ENCODE measurements at regions of chr7 and their contacts with region 1.

Region 1: DNA sequence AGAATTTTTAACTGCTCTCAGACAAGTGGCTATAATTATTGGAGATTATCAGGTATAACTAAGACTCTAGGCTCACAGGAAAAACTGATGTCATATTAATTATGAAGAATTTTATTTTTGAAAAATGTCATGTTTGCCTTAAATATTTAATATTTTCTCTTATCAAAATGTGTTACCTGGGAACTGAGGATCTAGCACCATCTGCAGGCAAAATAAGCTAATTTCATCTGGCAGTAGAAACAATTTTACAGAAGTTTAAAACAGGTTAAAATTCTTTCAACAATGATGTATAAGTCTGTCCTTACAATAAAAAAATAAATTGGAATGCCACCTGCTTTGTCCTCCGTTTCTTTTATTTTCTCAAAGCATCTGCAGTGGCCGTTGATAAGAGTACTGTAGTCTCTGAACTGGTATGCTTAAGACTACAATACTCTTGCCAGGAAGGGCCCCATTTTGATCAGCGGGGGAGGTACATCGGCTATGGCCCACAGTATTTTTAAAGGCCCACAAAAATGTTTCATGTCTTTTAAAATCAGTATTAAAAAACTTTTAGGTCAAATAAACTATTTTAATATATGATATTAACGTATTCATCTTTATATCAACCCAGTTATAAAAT is 81.3 kb downstream of the VWDE start:
- DNase-seq: no peak
- H3K4me3 Mint-ChIP-seq: no peak overlapping the region
- H3K27ac Mint-ChIP-seq: no peak overlapping the region
- H3K4me1 Mint-ChIP-seq: no peaks in the 10 kb centered on the region
- H3K27me3 Mint-ChIP-seq: no peaks in the 10 kb centered on the region

Region 2: DNA sequence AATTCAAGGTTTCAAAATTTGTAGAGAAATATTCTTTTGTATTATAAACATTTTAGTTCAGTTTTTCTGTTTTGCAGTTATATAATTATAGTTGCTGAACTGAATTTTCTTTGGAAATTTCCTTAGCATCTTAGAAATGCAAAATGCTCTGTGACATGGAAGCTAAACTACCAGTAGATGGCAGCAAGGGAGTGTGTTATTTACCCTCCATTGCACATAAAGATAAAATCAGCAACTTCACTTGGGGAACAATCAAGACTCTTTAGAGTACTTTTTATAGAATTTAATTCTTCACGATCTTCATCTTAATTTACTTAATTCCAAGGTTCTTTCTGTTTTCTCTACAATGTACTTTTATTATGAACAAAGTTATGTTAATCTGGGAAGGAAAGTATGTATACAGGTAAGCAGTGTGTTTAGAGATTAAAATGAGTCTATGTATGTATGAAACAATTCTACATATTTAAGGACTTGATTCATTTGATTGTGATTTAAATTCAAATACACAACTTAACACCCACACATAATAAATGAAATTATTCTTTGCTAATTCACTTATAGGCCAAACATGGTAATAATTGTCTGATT is 894.6 kb before region 1 on chr7:
- CTCF ChIA-PET with region 1: no interaction called
- POLR2A ChIA-PET with region 1: no interaction called
- intact Hi-C with region 1: loop called (anchors 2 kb)
- DNase-seq: no peak
- H3K4me3 Mint-ChIP-seq: no peak overlapping the region
- H3K27ac Mint-ChIP-seq: no peak overlapping the region
- H3K4me1 Mint-ChIP-seq: no peaks in the 10 kb centered on the region
- H3K27me3 Mint-ChIP-seq: no peaks in the 10 kb centered on the region

Region 3: DNA sequence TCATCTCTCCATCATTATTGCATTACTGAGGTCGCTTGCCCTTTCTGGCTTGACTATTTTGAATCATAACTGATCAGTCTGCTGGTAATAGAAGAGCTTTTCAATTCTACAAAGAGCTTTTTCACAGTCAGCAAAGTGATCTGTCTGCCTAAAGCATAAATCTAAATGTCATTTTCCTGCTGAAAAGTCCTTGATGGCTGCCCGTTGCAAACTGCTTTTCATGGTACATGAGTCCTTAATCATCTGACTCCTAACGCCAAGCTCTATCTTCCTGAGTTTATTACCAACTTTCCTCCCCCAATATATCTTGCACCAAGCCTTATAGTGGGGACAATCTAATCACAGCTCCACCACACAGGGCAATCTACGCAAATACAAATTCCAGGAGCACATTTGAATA is 530.2 kb before region 1 on chr7:
- CTCF ChIA-PET with region 1: no interaction called
- POLR2A ChIA-PET with region 1: no interaction called
- intact Hi-C with region 1: no loop called
- DNase-seq: no peak
- H3K4me3 Mint-ChIP-seq: no peak overlapping the region
- H3K27ac Mint-ChIP-seq: no peak overlapping the region
- H3K4me1 Mint-ChIP-seq: no peaks in the 10 kb centered on the region
- H3K27me3 Mint-ChIP-seq: no peaks in the 10 kb centered on the region

Region 4: GRCh38 chr7:12062062-12062461 is 260.3 kb before region 1 on chr7:
- CTCF ChIA-PET with region 1: interaction called, 18 read pairs
- POLR2A ChIA-PET with region 1: no interaction called
- intact Hi-C with region 1: loop called (anchors 1 kb)
- DNase-seq: no peak
- H3K4me3 Mint-ChIP-seq: no peak overlapping the region
- H3K27ac Mint-ChIP-seq: no peak overlapping the region
- H3K4me1 Mint-ChIP-seq: peaks cover 13% of the 10 kb centered on the region
- H3K27me3 Mint-ChIP-seq: no peaks in the 10 kb centered on the region

Region 5: DNA sequence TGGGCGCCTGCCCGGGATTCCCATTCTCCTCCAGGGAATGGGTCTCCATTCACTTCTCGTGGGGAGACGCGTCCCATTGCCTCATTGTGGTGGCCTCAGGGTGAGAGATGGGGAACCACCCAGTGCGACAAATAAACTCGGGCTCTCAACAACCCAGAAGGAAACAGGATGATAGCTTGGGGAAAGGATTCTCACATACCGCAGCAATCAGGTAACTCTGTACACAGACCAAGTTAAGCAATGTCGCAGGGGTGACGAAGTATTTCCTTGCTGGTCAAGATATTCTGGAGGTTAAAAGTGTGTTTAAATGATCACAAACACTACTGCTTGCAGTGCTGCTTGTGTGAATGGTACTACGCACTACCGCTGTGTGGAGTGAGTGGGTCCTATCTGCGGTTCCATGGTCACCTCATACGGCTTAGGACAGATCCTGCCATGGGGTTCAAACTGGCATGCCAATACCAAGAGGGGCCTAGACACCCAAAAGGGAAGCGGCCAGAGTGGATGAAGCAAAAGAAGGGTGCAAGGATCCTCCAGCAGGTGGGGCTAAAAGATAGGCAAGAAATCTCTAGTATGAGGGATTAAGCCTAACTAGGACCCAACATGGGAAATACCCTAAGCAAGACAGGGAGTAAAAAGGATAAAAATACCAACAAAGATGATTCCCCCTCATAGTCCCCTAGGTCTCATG is 255.1 kb before region 1 on chr7:
- CTCF ChIA-PET with region 1: interaction called, 18 read pairs
- POLR2A ChIA-PET with region 1: no interaction called
- intact Hi-C with region 1: loop called (anchors 1 kb)
- DNase-seq: peak; percentile 62
- H3K4me3 Mint-ChIP-seq: no peak overlapping the region
- H3K27ac Mint-ChIP-seq: no peak overlapping the region
- H3K4me1 Mint-ChIP-seq: peaks cover 14% of the 10 kb centered on the region
- H3K27me3 Mint-ChIP-seq: no peaks in the 10 kb centered on the region

Region 6: GRCh38 chr7:12111422-12112405 is 210.7 kb before region 1 on chr7:
- CTCF ChIA-PET with region 1: no interaction called
- POLR2A ChIA-PET with region 1: no interaction called
- intact Hi-C with region 1: loop called (anchors 5 kb)
- DNase-seq: peak; percentile 26
- H3K4me3 Mint-ChIP-seq: peak overlapping the region; percentile 52
- H3K27ac Mint-ChIP-seq: no peak overlapping the region
- H3K4me1 Mint-ChIP-seq: peaks cover 10% of the 10 kb centered on the region
- H3K27me3 Mint-ChIP-seq: peaks cover 36% of the 10 kb centered on the region

Region 7: DNA sequence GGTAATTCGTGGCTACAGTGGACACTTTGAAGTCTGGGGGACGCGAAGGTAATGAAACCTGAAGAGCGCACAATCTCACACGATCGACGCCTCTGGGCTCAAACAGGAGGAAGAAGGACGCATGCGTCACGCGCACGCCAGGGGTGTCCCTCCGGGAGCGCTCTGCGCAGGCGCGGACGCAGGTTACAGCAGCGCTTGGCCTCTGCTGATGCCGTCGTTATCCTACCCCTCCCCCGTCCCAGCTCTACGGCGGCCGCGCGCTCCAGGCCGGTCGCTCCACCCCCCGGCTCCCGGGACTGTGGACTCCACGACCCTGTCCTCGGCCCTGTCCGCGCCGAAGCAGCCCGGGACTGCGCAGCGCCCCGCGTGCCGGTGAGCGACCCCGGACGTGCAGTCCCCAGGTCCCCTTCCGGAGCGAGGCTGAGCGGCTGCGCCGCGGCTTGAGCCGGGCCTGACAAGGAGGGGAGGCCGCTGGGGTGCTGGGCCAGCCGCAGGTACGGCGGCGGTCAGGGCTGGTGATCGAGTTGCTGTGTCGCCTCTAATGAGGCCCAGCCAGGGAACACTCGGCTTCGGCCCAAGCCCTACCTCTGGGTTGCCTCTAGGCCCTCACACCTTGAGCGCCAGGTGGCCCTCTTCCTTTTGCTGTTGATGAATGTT is 111.2 kb before region 1 on chr7 and contains the start of gene TMEM106B:
- CTCF ChIA-PET with region 1: interaction called, 6 read pairs
- POLR2A ChIA-PET with region 1: no interaction called
- intact Hi-C with region 1: loop called (anchors 2 kb)
- DNase-seq: peak; percentile 98
- H3K4me3 Mint-ChIP-seq: peak within 1 kb of the TSS; percentile 97
- H3K27ac Mint-ChIP-seq: peak within 1 kb of the TSS; percentile 91
- H3K4me1 Mint-ChIP-seq: peaks cover 28% of the 10 kb centered on the region
- H3K27me3 Mint-ChIP-seq: no peaks in the 10 kb centered on the region
- total RNA-seq, gene TMEM106B: 25.5 to 26.2 TPM

Region 8: DNA sequence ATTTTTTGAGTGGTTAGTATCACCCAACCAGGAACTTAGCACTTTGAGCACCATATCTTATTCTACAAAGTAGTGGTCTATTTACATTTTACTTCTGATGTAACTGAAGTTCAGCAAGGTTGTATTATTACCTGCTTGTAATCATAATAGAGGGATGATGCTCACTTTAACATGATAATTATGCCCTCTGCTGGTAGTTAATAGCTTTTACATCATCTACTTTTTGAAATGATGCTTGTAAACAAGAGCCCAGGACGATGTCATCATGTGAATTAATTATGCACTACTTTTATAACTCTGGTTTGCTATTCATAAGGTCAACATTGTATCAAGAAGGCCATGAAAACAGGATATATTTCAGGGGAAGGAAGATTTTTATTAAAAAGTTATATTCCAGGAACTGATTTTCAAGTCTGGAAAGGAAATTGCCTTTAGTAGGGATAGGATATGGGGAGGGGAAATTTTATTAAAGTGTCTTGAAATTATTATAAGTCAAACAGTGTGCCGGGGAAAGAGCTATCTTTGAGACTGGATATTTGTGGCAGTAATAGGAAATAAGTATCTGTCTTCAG is 167.8 kb after region 1 on chr7:
- CTCF ChIA-PET with region 1: no interaction called
- POLR2A ChIA-PET with region 1: no interaction called
- intact Hi-C with region 1: loop called (anchors 10 kb)
- DNase-seq: no peak
- H3K4me3 Mint-ChIP-seq: no peak overlapping the region
- H3K27ac Mint-ChIP-seq: no peak overlapping the region
- H3K4me1 Mint-ChIP-seq: no peaks in the 10 kb centered on the region
- H3K27me3 Mint-ChIP-seq: no peaks in the 10 kb centered on the region